ENCODE measurements at regions of chr1 and their contacts with region 1.

Region 1: GRCh38 chr1:21368515-21369289 is 71.2 kb upstream of the NBPF3 start:
- DNase-seq: peak; percentile 37 to 78
- ATAC-seq: peak; percentile 96 to 97
- H3K4me3 ChIP-seq: no peak overlapping the region
- H3K27ac ChIP-seq: peak overlapping the region; percentile 32 to 65; a peak in 4 of 6 replicates
- H3K4me1 ChIP-seq: peaks cover 4% of the 10 kb centered on the region; the same call in 1 of the 3 replicates
- CTCF ChIP-seq: peak; percentile 94
- EP300 ChIP-seq: no peak
- POLR2A ChIP-seq: no peak
- RAD21 ChIP-seq: peak; percentile 99 to 100

Region 2: GRCh38 chr1:21216835-21217811 is 151.6 kb before region 1 on chr1:
- CTCF ChIA-PET with region 1: interaction called, 66 read pairs
- POLR2A ChIA-PET with region 1: no interaction called
- DNase-seq: peak; percentile 14 to 60
- ATAC-seq: peak; percentile 57 to 71; a peak in 4 of 6 replicates
- H3K4me3 ChIP-seq: no peak overlapping the region
- H3K27ac ChIP-seq: no peak overlapping the region
- H3K4me1 ChIP-seq: peaks cover 2% of the 10 kb centered on the region; the same call in 2 of the 3 replicates
- CTCF ChIP-seq: peak; percentile 61
- EP300 ChIP-seq: no peak
- POLR2A ChIP-seq: no peak
- RAD21 ChIP-seq: peak; percentile 44 to 63; a peak in 3 of 5 replicates

Region 3: DNA sequence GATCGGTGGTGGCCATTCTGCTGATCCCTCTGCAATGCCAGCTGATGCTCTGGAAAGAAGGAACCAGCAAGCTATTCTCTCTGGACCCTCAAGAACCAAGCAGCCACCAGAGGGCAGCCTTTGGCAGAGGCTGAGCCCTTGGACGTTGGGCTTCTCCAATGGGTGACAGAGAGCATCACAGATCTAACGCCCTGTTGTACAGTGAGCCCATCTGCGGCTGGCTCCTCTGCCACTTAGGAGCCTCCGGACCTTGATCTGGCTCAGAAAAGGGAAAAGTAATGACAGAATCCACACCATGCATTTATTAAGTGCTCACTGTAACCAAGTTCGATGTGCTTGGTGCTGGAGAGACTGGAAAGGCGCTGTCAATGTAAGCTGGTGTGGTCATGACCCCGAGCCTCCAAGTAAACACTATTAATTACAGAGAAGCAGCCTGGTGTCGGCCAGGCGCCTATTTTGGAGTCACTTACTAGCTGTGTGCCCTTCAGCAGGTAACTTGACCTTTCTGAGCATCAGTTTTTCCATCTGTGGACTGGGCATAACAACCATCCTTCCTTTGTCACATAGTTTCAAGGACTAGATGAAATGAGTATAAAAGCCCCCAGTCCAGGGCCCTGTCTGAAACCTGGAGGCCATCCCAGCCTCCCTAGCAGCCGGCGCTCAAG is 113.3 kb before region 1 on chr1:
- CTCF ChIA-PET with region 1: interaction called, 253 read pairs
- POLR2A ChIA-PET with region 1: interaction called, 5 read pairs
- DNase-seq: peak; percentile 55 to 85
- ATAC-seq: peak; percentile 92 to 96
- H3K4me3 ChIP-seq: no peak overlapping the region
- H3K27ac ChIP-seq: peak overlapping the region; percentile 44 to 56; a peak in 5 of 6 replicates
- H3K4me1 ChIP-seq: peaks cover 29% of the 10 kb centered on the region
- CTCF ChIP-seq: peak; percentile 74
- EP300 ChIP-seq: no peak
- POLR2A ChIP-seq: no peak
- RAD21 ChIP-seq: peak; percentile 91 to 96

Region 4: GRCh38 chr1:21318714-21319159 is 50.0 kb before region 1 on chr1:
- CTCF ChIA-PET with region 1: interaction called, 12 read pairs
- POLR2A ChIA-PET with region 1: no interaction called
- DNase-seq: no peak
- ATAC-seq: no peak
- H3K4me3 ChIP-seq: no peak overlapping the region
- H3K27ac ChIP-seq: peak overlapping the region; percentile 94 to 98
- H3K4me1 ChIP-seq: peaks cover 58% of the 10 kb centered on the region
- CTCF ChIP-seq: no peak
- EP300 ChIP-seq: no peak
- POLR2A ChIP-seq: no peak
- RAD21 ChIP-seq: no peak

Region 5: DNA sequence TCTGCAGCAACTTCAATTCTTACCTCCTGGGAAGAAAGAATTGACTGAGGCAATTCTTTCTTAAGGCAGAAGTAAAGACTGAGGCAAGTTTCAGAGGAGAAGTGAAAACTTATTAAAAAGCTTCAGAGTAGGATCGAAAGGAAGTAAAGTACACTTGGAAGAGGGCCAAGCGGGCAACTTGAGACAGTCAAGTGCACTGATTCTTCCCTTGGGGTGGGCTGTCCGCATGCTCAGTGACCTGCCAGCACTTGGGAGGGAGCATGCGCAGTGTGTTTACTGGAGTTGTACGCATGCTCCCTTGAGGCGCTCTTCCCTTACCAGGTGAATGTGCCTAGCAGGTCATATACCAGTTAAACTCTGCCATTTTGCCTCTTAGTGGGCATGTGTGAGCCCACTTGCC is 15.9 kb after region 1 on chr1:
- CTCF ChIA-PET with region 1: interaction called, 11 read pairs
- POLR2A ChIA-PET with region 1: no interaction called
- DNase-seq: no peak
- ATAC-seq: no peak
- H3K4me3 ChIP-seq: no peak overlapping the region
- H3K27ac ChIP-seq: no peak overlapping the region
- H3K4me1 ChIP-seq: no peaks in the 10 kb centered on the region
- CTCF ChIP-seq: no peak
- EP300 ChIP-seq: no peak
- POLR2A ChIP-seq: no peak
- RAD21 ChIP-seq: no peak

Region 6: GRCh38 chr1:21573971-21574465 is 205.3 kb after region 1 on chr1:
- CTCF ChIA-PET with region 1: interaction called, 17 read pairs
- POLR2A ChIA-PET with region 1: no interaction called
- DNase-seq: peak; percentile 39 to 70
- ATAC-seq: peak; percentile 85 to 91
- H3K4me3 ChIP-seq: no peak overlapping the region
- H3K27ac ChIP-seq: no peak overlapping the region
- H3K4me1 ChIP-seq: no peaks in the 10 kb centered on the region
- CTCF ChIP-seq: peak; percentile 55
- EP300 ChIP-seq: no peak
- POLR2A ChIP-seq: no peak
- RAD21 ChIP-seq: peak; percentile 71 to 76

Region 7: DNA sequence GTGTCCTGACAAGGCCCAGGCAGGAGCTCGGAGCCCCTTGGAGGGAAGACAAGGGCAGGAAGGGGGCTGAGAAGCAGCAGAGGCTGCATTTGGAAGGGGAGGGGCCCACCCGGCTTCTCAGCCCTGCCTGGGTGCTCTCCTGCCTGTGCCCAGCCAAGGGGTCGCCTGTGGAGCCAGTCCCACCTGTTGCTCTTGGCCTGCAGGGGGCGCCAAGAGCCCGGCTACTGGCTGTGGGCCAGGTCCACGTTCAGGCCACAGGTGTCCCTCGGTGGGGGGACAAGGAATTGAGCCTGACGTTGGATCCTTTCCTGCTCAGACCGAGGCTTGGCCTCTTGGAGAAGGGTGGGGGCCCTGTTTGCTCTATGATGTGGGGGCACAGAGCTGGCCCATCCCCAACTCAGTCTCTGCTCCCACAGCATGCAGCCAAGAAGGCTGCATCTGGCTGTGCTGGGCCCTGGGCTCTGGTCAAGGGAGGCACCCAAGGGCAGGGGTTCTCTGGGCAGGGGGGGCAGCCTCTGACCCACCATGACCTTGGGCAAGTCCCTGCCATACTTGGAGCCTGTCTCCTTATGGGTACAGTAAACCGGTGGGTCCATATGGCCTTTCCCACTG is 763.3 kb after region 1 on chr1:
- CTCF ChIA-PET with region 1: no interaction called
- POLR2A ChIA-PET with region 1: no interaction called
- DNase-seq: peak; percentile 43 to 53
- ATAC-seq: peak; percentile 56 to 86; a peak in 4 of 6 replicates
- H3K4me3 ChIP-seq: no peak overlapping the region
- H3K27ac ChIP-seq: peak overlapping the region in 1 of 2 experiments; percentile 40; a peak in 1 of 6 replicates
- H3K4me1 ChIP-seq: peaks cover 13% of the 10 kb centered on the region
- CTCF ChIP-seq: peak; percentile 76
- EP300 ChIP-seq: no peak
- POLR2A ChIP-seq: no peak
- RAD21 ChIP-seq: peak; percentile 79 to 86

Measured in A549 (cell line).